Sigmoid colon (tissue), 7 donors: ENCODE measurements at regions of chr21 and their contacts with region 1.

Region 1: DNA sequence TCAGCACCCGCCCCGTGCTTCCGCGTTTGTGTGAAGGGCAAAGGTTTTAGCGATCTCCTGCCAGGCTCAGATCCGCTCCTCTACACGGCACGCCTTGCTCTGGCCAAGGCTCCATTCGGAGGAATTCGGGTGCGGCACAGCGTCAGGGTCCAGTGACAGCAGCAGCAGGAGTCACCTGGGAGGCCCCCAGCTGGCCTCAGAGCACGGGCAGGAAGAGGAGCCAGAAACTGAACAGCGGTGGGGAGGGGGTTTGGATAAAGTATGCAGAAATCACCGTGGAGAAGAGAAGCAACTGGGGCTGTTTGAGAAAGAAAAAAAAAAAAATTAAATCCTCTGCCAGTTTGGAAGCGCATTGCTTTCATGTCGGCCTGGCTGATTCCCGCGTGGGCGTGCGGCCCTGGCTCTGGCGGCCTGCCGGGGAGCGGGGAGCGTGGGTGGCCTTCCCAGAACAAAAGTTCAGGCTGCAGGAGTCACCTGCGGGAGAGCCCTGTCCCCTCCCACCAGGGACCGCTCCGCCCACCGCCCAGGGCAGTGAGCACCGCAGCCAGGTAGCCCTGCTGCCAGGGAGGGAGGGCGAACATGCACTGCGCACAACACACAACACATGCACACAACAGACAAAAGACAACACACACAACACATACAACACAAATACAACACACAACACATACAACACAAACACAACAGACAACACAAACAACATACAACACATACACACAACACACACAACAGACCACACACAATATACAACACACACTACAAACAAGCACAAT is 107.6 kb downstream of the ETS2 start:
- DNase-seq: peak; percentile 91
- H3K4me3 ChIP-seq: peak overlapping the region in 3 of 4 donors; percentile 11 to 17 (median 16)
- H3K27ac ChIP-seq: peak overlapping the region; percentile 54 to 82 (median 79)
- H3K4me1 ChIP-seq: peaks cover 0 to 33% (median 23%) of the 10 kb centered on the region in 4 donors
- H3K27me3 ChIP-seq: no peaks in the 10 kb centered on the region
- CTCF ChIP-seq: no peak
- EP300 ChIP-seq: no peak
- POLR2A ChIP-seq: peak in 1 of 2 donors; percentile 49

Region 2: DNA sequence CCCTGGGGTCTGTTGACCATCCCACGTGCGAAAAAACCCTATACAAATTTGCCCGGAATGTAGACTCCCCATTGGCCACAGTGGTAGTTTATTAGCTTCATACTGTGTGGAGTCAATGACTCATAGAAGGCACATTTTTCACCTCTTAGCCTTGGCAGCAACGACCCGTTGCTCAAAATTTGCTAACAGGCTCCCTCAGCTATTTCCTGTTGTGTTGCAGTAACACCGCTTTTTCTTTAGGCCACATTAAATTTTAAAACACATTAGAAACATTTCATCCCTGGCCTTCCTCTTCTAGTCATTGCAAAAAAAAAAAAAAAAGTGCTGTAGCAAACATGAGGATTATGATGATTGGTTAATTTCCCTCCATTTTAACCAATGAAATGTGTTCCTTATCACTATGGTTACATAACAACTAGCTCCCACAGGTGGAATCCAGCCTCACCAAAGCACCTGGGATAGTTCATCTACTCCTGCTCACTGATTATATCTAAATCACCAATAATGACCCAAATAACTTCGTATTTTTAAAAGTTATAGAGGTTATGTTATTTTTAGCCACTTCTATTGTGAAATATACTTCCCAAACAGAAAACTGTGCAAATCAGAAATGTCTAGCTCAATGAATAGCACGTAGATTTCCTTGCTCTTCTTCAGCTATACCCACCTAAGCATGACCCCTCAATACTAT is 157.5 kb before region 1 on chr21:
- intact Hi-C with region 1: loop called (anchors 5 kb)
- DNase-seq: peak; percentile 86
- H3K4me3 ChIP-seq: no peak overlapping the region
- H3K27ac ChIP-seq: peak overlapping the region; percentile 64 to 89 (median 76)
- H3K4me1 ChIP-seq: peaks cover 0 to 76% (median 57%) of the 10 kb centered on the region in 4 donors
- H3K27me3 ChIP-seq: no peaks in the 10 kb centered on the region
- CTCF ChIP-seq: no peak
- EP300 ChIP-seq: peak in 1 of 4 donors; percentile 17
- POLR2A ChIP-seq: no peak

Region 3: DNA sequence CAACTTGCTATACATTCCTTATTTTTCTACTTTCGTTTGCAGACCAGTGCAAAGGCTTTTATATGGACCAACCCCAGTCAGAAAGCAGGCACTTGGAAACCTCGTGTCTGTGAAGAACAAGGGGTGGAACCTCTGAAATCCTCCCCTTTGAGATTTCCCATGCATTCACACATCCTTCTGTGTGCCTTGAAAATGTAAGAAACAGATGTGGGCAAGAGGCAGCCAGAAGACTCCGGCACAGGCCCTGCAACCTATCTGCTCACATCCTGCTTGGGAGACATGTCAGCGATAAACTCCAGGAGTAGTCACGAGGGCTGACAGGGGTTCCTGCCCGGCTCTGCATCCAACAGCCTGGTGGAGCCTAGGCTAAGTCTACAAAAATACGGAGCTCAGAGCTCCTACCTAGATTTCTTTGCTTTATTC is 65.1 kb before region 1 on chr21:
- intact Hi-C with region 1: no loop called
- DNase-seq: peak; percentile 90
- H3K4me3 ChIP-seq: no peak overlapping the region
- H3K27ac ChIP-seq: peak overlapping the region in 3 of 4 donors; percentile 37 to 69 (median 55)
- H3K4me1 ChIP-seq: peaks cover 0 to 19% (median 16%) of the 10 kb centered on the region in 4 donors
- H3K27me3 ChIP-seq: no peaks in the 10 kb centered on the region
- CTCF ChIP-seq: no peak
- EP300 ChIP-seq: peak; percentile 47 to 91 (median 69)
- POLR2A ChIP-seq: no peak